Mammary epithelial cell (primary cell): ENCODE measurements at regions of chr3 and their contacts with region 1.

Region 1: DNA sequence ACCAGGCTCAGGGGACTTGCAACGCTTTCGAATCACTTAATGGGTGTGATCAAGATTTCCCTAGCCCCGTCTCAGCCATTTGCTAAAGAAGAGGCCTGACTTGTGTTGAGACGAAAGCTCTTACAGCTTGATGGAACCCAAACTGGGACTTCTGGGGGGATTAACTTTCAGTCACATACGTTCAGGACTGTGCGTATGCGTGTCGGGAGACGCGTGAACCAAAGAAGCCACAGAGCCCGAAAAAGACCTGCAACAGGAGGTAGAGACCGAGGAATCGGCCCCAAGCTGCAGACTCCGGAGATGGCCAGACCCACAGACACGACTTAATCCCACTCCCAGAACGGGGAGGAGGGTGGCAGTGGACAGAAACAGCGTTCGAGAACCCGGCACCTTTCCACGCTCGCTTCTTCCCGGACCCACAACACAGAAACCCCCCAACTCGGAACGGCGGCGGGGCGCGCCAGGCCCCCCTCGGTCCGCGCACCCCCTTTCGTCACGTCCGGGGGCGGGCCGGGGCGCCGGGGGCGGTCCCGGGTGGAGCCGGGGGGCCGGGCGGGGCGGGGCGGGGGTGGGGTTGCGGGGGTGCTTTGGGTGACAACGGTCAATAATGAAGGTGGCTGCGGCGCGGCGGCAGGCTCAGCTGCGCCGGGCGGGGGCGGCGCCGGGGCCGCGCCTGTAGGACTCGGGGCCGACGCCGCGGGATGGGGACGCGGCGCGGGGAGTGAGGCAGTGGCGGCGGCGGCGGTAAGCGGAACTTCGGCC is at the start of gene ATP11B:
- DNase-seq: peak; percentile 66
- H3K4me3 ChIP-seq: peak within 1 kb of the TSS; percentile 61 to 76 (median 67)
- H3K27ac ChIP-seq: peak within 1 kb of the TSS; percentile 81
- H3K4me1 ChIP-seq: peaks cover 13% of the 10 kb centered on the region
- H3K27me3 ChIP-seq: no peaks in the 10 kb centered on the region
- CTCF ChIP-seq: no peak
- total RNA-seq, gene ATP11B: 74.4 to 80.2 TPM

Region 2: DNA sequence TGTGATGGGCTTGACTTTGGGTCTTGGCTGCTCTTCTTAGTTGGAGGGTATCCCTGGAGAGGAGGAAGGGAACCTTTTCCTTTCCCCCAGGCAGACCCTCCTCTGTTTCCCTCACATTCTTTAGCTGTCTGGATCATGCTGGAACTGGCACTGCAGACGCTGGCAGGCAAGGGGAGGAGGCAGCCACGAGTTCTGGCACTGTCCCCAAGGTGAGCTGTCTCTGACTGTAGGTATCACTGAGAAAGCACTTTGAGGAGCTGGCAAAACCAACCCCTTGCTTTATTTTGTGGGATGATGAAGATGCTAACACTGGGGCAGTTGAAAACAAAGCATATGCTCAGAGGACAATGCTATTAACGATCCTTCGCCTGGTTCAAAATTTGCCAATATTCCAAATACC is 906.4 kb before region 1 on chr3:
- CTCF ChIA-PET with region 1: no interaction called
- dilution Hi-C with region 1: no loop called
- in situ Hi-C with region 1: no loop called
- intact Hi-C with region 1: no loop called
- DNase-seq: peak; percentile 73
- H3K4me3 ChIP-seq: no peak overlapping the region
- H3K27ac ChIP-seq: no peak overlapping the region
- H3K4me1 ChIP-seq: peaks cover 23% of the 10 kb centered on the region
- H3K27me3 ChIP-seq: no peaks in the 10 kb centered on the region
- CTCF ChIP-seq: no peak

Region 3: GRCh38 chr3:182739619-182740018 is 53.5 kb before region 1 on chr3:
- CTCF ChIA-PET with region 1: no interaction called
- dilution Hi-C with region 1: no loop called
- in situ Hi-C with region 1: no loop called
- intact Hi-C with region 1: loop called (anchors 2 kb)
- DNase-seq: no peak
- H3K4me3 ChIP-seq: no peak overlapping the region
- H3K27ac ChIP-seq: no peak overlapping the region
- H3K4me1 ChIP-seq: peaks cover 18% of the 10 kb centered on the region
- H3K27me3 ChIP-seq: no peaks in the 10 kb centered on the region
- CTCF ChIP-seq: no peak

Region 4: GRCh38 chr3:182755308-182755707 is 37.8 kb before region 1 on chr3:
- CTCF ChIA-PET with region 1: no interaction called
- dilution Hi-C with region 1: no loop called
- in situ Hi-C with region 1: no loop called
- intact Hi-C with region 1: no loop called
- DNase-seq: no peak
- H3K4me3 ChIP-seq: no peak overlapping the region
- H3K27ac ChIP-seq: no peak overlapping the region
- H3K4me1 ChIP-seq: peaks cover 15% of the 10 kb centered on the region
- H3K27me3 ChIP-seq: no peaks in the 10 kb centered on the region
- CTCF ChIP-seq: no peak

Region 5: DNA sequence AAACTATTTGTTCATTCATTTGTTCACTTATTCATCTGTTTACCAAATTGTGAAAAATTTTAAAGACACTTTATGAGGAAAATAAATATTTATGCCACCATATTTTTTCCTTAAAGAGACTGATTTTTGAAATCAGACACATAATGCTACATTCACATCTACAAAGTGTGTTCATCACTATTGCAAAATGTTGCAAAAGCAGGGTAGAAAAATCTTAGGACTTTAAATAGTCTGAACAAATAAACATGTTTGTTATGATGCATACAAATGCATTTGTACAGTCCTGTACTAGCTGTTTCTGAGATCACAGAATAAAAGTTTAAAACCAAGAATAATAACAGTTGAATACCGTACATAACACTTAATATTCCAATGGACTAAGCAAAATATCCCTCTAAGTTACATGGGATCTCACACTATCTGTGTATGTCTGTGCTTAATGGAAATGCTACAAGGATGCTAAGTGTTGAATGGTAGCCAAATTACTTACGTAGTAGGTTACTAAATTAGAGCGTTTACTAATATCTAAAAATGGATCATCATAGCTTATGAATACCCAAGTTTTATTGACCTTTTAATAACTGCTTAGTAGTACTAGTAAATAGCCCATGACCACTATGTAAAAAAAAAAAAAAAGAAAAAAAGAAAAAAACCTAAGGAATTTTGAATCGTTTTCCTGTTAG is 25.4 kb after region 1 on chr3:
- CTCF ChIA-PET with region 1: no interaction called
- dilution Hi-C with region 1: no loop called
- in situ Hi-C with region 1: no loop called
- intact Hi-C with region 1: no loop called
- DNase-seq: no peak
- H3K4me3 ChIP-seq: no peak overlapping the region
- H3K27ac ChIP-seq: no peak overlapping the region
- H3K4me1 ChIP-seq: no peaks in the 10 kb centered on the region
- H3K27me3 ChIP-seq: no peaks in the 10 kb centered on the region
- CTCF ChIP-seq: no peak

Region 6: DNA sequence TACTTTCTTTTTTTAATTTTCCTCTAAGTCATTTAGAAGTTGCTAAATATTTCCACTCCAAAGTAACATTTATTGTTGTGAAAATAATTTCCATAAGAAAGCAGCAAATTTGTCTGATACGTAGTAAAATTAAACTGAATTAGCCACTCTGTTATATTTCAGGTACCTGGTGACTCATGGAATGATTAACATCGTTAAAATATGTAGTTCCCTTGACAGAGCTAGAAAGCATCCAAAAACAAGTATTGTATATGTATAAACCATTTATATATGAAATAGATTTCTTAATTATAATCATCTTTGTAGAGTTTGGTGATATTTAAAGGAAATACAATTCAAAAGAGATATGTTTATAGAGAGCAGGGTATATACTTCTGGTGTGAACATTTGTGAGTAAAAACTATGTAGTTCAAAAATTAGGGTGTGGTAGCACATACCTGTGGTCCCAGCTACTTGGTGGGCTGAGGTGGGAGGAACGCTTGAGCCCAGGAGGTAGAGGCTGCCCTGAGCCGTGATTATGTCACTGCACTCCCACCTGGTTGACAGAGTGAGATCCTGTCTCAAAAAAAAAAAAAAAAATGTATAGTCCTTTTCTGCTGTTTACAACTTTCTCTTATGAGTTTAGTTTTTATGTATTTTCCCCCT is 36.8 kb after region 1 on chr3:
- CTCF ChIA-PET with region 1: no interaction called
- dilution Hi-C with region 1: no loop called
- in situ Hi-C with region 1: no loop called
- intact Hi-C with region 1: loop called (anchors 5 kb)
- DNase-seq: peak; percentile 54
- H3K4me3 ChIP-seq: peak overlapping the region in 1 of 3 experiments; percentile 12
- H3K27ac ChIP-seq: peak overlapping the region; percentile 94
- H3K4me1 ChIP-seq: peaks cover 15% of the 10 kb centered on the region
- H3K27me3 ChIP-seq: no peaks in the 10 kb centered on the region
- CTCF ChIP-seq: no peak